ENCODE measurements at regions of chr9 and their contacts with region 1.

Region 1: DNA sequence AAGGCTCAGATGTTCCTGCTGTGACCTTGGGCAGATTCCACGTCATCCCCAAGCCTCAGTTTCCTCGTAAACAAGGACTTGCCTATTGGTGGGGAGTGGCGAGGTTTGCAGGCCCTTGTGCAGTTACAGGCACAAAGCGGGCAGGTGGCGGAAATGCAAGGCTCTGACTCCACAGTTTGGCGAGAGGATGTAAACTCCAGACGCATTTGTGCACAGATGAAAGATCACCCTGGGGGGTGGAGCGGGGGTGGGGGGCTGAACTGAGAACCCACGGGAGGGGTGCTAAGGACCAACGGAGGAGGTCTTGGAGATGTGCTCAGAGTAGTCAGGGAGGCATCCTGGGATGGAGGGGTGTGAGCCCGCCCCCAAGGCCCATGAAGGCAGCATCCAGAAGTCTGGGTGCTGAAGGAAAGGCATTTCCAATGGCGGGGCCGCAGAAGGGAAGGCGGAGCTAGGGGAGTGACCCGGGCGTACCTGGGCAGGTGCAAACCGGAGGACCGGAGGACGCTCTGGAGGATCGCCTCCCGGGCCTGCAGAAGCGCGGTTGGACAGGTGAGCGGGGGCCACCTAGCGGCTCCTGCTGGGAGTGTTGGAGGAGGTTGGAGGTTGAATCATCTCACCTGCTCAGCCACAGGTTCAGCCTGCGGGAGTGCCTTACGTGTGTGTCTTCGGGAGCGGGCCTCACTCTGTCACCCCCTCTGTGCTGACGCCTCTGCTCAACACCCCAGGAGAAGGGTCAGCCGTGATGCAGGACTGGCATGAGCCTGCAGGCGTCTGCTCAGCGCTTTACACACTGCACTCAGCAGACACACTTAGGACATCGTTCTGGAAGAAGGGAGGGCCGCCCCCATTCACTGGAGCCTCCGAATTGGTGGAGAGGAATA is 1.9 kb upstream of the FIBCD1 start:
- DNase-seq: peak; percentile 92 to 94
- H3K4me3 ChIP-seq: no peak overlapping the region
- H3K4me3 Mint-ChIP-seq: peak overlapping the region; percentile 47
- H3K27ac Mint-ChIP-seq: no peak overlapping the region
- H3K4me1 ChIP-seq: peaks cover 29% of the 10 kb centered on the region
- H3K4me1 Mint-ChIP-seq: peaks cover 14% of the 10 kb centered on the region
- H3K27me3 ChIP-seq: peaks cover 1% of the 10 kb centered on the region; the same call in 1 of the 2 replicates
- H3K27me3 Mint-ChIP-seq: peaks cover 28% of the 10 kb centered on the region
- CTCF ChIP-seq: peak; percentile 91 to 92

Region 2: GRCh38 chr9:130712564-130713285 is 228.2 kb before region 1 on chr9:
- CTCF ChIA-PET with region 1: no interaction called
- POLR2A ChIA-PET with region 1: no interaction called
- intact Hi-C with region 1: loop called (anchors 5 kb)
- DNase-seq: peak; percentile 98 to 99
- H3K4me3 ChIP-seq: peak overlapping the region; percentile 80
- H3K4me3 Mint-ChIP-seq: peak overlapping the region; percentile 96
- H3K27ac Mint-ChIP-seq: peak overlapping the region; percentile 96
- H3K4me1 ChIP-seq: peaks cover 22% of the 10 kb centered on the region
- H3K4me1 Mint-ChIP-seq: peaks cover 8% of the 10 kb centered on the region
- H3K27me3 ChIP-seq: no peaks in the 10 kb centered on the region
- H3K27me3 Mint-ChIP-seq: no peaks in the 10 kb centered on the region
- CTCF ChIP-seq: no peak

Region 3: DNA sequence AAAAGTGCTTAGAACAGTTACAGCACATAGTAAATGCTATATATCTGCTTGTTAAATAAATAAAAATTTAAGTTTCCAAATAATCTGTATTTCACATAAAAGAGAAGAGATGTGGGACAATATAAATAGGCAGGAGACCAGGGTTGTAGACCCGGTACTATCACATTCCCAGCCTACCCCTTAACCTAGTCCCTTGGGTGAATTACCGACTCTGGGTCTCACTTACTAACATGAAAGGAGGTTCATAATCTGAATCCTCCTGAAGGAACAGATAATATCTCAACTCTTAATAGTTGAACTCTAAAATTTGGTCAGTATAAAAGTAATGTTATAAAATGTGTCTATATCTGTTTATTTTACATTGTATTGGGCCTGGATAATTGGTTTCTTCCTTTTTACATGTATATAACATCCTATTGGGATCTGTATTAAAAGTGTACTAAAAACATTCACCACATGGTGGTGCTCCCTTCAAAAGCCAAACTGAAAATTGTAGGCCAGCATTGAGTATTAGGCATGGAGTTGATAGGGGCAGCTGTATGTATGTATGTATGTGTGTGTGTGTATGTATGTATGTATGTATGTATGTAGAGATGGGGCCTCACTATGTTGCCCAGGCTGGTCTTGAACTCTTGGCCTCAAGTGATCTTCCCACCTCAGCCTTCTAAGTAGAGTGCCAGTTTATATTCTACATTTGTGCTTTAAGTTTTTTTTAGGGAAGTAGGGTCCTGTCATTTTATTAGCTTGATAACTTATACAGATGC is 170.1 kb before region 1 on chr9:
- CTCF ChIA-PET with region 1: no interaction called
- POLR2A ChIA-PET with region 1: no interaction called
- intact Hi-C with region 1: loop called (anchors 5 kb)
- DNase-seq: peak in 1 of 2 experiments; percentile 63
- H3K4me3 ChIP-seq: no peak overlapping the region
- H3K4me3 Mint-ChIP-seq: no peak overlapping the region
- H3K27ac Mint-ChIP-seq: no peak overlapping the region
- H3K4me1 ChIP-seq: peaks cover 11% of the 10 kb centered on the region
- H3K4me1 Mint-ChIP-seq: peaks cover 12% of the 10 kb centered on the region
- H3K27me3 ChIP-seq: no peaks in the 10 kb centered on the region
- H3K27me3 Mint-ChIP-seq: no peaks in the 10 kb centered on the region
- CTCF ChIP-seq: peak; percentile 51 to 57

Region 4: DNA sequence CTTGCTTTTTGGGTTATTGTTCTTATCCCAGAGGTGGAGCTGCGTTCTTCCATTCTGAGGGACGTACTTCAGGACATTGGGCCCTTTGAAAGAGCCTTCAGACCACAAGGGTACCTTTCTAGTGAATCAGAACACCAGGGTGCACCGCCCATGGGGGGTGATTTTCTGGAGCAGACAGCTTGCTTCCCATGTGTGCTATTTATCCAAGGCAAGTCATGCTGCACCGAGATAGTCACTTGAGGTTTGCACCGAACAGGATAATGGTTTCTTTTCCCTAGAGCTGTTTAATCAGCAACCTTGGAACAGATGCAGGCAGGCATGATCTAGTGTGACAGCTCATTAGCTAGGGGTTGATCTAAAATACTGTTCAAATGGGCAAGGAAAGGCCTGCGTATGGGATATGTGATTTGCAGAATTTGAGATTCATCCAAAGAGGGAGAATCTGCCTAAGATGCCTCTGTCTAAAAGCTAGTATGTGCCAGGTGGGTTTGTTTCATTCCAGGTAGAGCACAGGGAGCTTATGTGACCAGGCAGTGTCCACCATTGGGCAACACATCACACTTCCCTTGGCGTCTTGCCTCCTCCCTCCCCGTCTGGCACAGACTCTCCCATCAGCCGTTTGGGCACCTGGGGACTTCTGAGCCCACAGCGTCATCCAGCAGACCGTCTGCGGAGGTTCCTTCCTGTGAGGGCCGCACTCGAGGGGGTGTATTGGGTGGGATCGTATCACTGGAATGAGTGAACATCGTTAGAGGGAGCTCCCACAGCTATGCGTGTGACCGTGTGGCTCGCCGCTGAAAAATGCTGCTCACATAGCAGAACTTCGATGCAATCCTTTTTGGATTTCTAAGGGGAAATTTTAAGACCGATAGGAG is 82.8 kb before region 1 on chr9:
- CTCF ChIA-PET with region 1: no interaction called
- POLR2A ChIA-PET with region 1: no interaction called
- intact Hi-C with region 1: no loop called
- DNase-seq: no peak
- H3K4me3 ChIP-seq: no peak overlapping the region
- H3K4me3 Mint-ChIP-seq: no peak overlapping the region
- H3K27ac Mint-ChIP-seq: no peak overlapping the region
- H3K4me1 ChIP-seq: peaks cover 1% of the 10 kb centered on the region
- H3K4me1 Mint-ChIP-seq: no peaks in the 10 kb centered on the region
- H3K27me3 ChIP-seq: no peaks in the 10 kb centered on the region
- H3K27me3 Mint-ChIP-seq: no peaks in the 10 kb centered on the region
- CTCF ChIP-seq: no peak

Region 5: GRCh38 chr9:130893341-130894101 is 47.4 kb before region 1 on chr9:
- CTCF ChIA-PET with region 1: interaction called, 3 read pairs
- POLR2A ChIA-PET with region 1: no interaction called
- intact Hi-C with region 1: loop called (anchors 1 kb)
- DNase-seq: peak in 1 of 2 experiments; percentile 41
- H3K4me3 ChIP-seq: no peak overlapping the region
- H3K4me3 Mint-ChIP-seq: no peak overlapping the region
- H3K27ac Mint-ChIP-seq: no peak overlapping the region
- H3K4me1 ChIP-seq: no peaks in the 10 kb centered on the region
- H3K4me1 Mint-ChIP-seq: no peaks in the 10 kb centered on the region
- H3K27me3 ChIP-seq: no peaks in the 10 kb centered on the region
- H3K27me3 Mint-ChIP-seq: peaks cover 3% of the 10 kb centered on the region
- CTCF ChIP-seq: peak; percentile 8 to 55